Activated CD4-positive, alpha-beta memory T cell treated with anti-CD3 and anti-CD28 coated beads for 36 hours (primary cell): ENCODE measurements at regions of chr1 and their contacts with region 1.

Region 1: GRCh38 chr1:101178688-101179491 is 57.9 kb upstream of the S1PR1 start:
- DNase-seq: peak; percentile 58
- H3K4me3 Mint-ChIP-seq: peak overlapping the region; percentile 71
- H3K27ac Mint-ChIP-seq: peak overlapping the region; percentile 100
- H3K4me1 Mint-ChIP-seq: peaks cover 79% of the 10 kb centered on the region
- H3K27me3 Mint-ChIP-seq: no peaks in the 10 kb centered on the region

Region 2: GRCh38 chr1:100443811-100444571 is 734.9 kb before region 1 on chr1:
- CTCF ChIA-PET with region 1: no interaction called
- POLR2A ChIA-PET with region 1: no interaction called
- intact Hi-C with region 1: loop called (anchors 2 kb)
- DNase-seq: peak; percentile 65
- H3K4me3 Mint-ChIP-seq: peak overlapping the region; percentile 82
- H3K27ac Mint-ChIP-seq: peak overlapping the region; percentile 98
- H3K4me1 Mint-ChIP-seq: peaks cover 84% of the 10 kb centered on the region
- H3K27me3 Mint-ChIP-seq: no peaks in the 10 kb centered on the region

Region 3: GRCh38 chr1:100921109-100921706 is 257.7 kb before region 1 on chr1:
- CTCF ChIA-PET with region 1: no interaction called
- POLR2A ChIA-PET with region 1: no interaction called
- intact Hi-C with region 1: loop called (anchors 2 kb)
- DNase-seq: no peak
- H3K4me3 Mint-ChIP-seq: no peak overlapping the region
- H3K27ac Mint-ChIP-seq: peak overlapping the region; percentile 52
- H3K4me1 Mint-ChIP-seq: peaks cover 56% of the 10 kb centered on the region
- H3K27me3 Mint-ChIP-seq: no peaks in the 10 kb centered on the region

Region 4: GRCh38 chr1:101004670-101005069 is 174.2 kb before region 1 on chr1:
- CTCF ChIA-PET with region 1: no interaction called
- POLR2A ChIA-PET with region 1: no interaction called
- intact Hi-C with region 1: loop called (anchors 2 kb)
- DNase-seq: no peak
- H3K4me3 Mint-ChIP-seq: no peak overlapping the region
- H3K27ac Mint-ChIP-seq: no peak overlapping the region
- H3K4me1 Mint-ChIP-seq: peaks cover 56% of the 10 kb centered on the region
- H3K27me3 Mint-ChIP-seq: no peaks in the 10 kb centered on the region

Region 5: GRCh38 chr1:101112051-101112780 is 66.7 kb before region 1 on chr1:
- CTCF ChIA-PET with region 1: no interaction called
- POLR2A ChIA-PET with region 1: no interaction called
- intact Hi-C with region 1: loop called (anchors 1 kb)
- DNase-seq: peak; percentile 76
- H3K4me3 Mint-ChIP-seq: peak overlapping the region; percentile 25
- H3K27ac Mint-ChIP-seq: peak overlapping the region; percentile 87
- H3K4me1 Mint-ChIP-seq: peaks cover 56% of the 10 kb centered on the region
- H3K27me3 Mint-ChIP-seq: no peaks in the 10 kb centered on the region

Region 6: GRCh38 chr1:101136739-101137138 is 42.2 kb before region 1 on chr1:
- CTCF ChIA-PET with region 1: interaction called, 5 read pairs
- POLR2A ChIA-PET with region 1: no interaction called
- intact Hi-C with region 1: loop called (anchors 1 kb)
- DNase-seq: peak; percentile 31
- H3K4me3 Mint-ChIP-seq: peak overlapping the region; percentile 14
- H3K27ac Mint-ChIP-seq: peak overlapping the region; percentile 79
- H3K4me1 Mint-ChIP-seq: peaks cover 60% of the 10 kb centered on the region
- H3K27me3 Mint-ChIP-seq: no peaks in the 10 kb centered on the region

Region 7: GRCh38 chr1:101257500-101258325 is 78.8 kb after region 1 on chr1:
- CTCF ChIA-PET with region 1: no interaction called
- POLR2A ChIA-PET with region 1: interaction called, 6 read pairs
- intact Hi-C with region 1: loop called (anchors 1 kb)
- DNase-seq: peak; percentile 49
- H3K4me3 Mint-ChIP-seq: no peak overlapping the region
- H3K27ac Mint-ChIP-seq: peak overlapping the region; percentile 67
- H3K4me1 Mint-ChIP-seq: peaks cover 66% of the 10 kb centered on the region
- H3K27me3 Mint-ChIP-seq: no peaks in the 10 kb centered on the region